CD8-positive, alpha-beta T cell (primary cell): ENCODE measurements at regions of chrX and their contacts with region 1.

Region 1: DNA sequence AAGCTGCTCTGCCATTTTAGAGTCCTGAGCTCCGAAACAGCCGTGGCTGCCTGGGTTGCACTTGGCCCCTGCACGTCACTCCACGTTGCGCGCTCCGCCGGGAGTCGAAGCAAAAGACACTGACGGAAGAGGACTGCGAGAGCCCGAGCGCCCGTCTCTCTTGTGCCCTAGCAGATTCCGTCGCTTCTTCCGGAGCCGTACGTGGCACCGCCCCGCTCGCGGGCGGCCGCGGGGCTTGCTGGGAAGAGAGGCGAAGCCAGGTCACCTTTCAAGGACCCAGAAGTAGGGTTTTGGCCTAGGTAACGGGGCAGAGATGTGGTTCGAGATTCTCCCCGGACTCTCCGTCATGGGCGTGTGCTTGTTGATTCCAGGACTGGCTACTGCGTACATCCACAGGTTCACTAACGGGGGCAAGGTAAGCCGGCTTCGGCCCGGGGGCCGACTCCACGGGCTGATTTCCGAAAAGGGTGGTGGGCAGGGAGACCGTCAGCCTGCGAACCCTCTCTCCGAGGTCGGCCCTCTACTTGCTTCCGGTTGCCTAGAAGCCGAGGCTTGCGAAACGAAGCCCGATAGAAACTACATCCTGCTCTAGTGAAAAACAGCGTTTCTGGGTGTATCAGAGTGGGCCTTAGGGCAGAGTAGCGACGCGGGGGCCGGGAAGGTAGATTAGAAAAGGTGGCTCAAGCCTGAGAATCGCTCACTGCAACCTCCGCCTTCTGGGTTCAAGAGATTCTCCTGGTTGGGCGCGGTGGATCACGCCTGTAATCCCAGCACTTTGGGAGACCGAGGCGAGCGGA is at the starts of genes NDUFA1 and RNF113A:
- DNase-seq: peak; percentile 69 to 94 (median 81)
- ATAC-seq: peak; percentile 87
- H3K4me3 ChIP-seq: peak within 1 kb of the TSS; percentile 77 to 80
- H3K4me3 Mint-ChIP-seq: peak within 1 kb of the TSS; percentile 97
- H3K27ac ChIP-seq: peak within 1 kb of the TSS; percentile 95 to 97
- H3K27ac Mint-ChIP-seq: peak within 1 kb of the TSS; percentile 99
- H3K4me1 ChIP-seq: peaks cover 7% of the 10 kb centered on the region
- H3K4me1 Mint-ChIP-seq: peaks cover 27% of the 10 kb centered on the region
- H3K27me3 ChIP-seq: no peaks in the 10 kb centered on the region
- H3K27me3 Mint-ChIP-seq: no peaks in the 10 kb centered on the region
- CTCF ChIP-seq: no peak
- total RNA-seq, gene NDUFA1: 48.3 to 51.0 TPM
- total RNA-seq, gene RNF113A: 27.8 to 29.4 TPM

Region 2: DNA sequence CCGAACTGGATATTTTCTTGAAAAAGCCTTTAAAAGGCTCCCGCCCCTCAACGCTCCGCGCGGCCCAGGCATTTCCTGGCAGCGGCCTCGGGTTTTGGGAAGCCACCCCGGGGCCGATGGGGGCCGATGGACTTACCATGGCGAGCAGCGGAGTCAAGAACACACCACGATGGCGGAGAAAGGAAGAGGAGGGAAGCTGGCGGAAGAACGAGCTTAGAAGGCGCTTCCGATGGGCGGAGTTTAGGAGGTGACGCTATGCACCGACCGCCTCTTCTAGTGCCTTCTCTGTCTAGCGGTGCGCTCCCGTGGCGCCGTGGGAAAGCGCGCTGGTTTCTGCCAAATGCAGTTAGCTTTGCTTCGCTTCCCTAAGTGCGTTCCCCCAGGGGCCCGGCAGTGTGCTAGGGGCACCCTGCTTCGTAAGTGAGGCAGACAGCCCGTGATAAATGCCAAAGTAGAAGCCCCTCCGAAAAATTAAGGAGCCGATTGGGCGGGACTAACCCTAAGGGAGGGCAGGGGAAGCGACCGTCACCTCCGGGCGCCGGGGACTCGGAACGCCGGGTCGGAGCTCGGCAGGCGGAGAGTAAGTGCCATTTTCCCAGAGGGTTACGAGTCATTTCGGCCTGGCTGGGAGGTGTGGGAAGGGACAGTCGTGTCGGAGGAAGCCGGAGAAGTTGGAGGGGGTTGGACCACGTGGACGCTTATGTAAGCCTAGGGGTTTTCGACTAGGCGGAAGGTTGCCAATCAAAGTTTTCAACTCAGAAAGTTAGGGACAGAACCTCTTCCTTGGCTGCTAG is 80.2 kb before region 1 on chrX and contains the start of gene RPL39:
- CTCF ChIA-PET with region 1: interaction called, 6 read pairs
- POLR2A ChIA-PET with region 1: interaction called, 33 read pairs
- intact Hi-C with region 1: loop called (anchors 1 to 2 kb)
- DNase-seq: peak; percentile 57 to 93 (median 78)
- ATAC-seq: peak; percentile 90
- H3K4me3 ChIP-seq: peak within 1 kb of the TSS; percentile 84 to 97
- H3K4me3 Mint-ChIP-seq: peak within 1 kb of the TSS; percentile 97
- H3K27ac ChIP-seq: peak within 1 kb of the TSS; percentile 88 to 98
- H3K27ac Mint-ChIP-seq: peak within 1 kb of the TSS; percentile 98
- H3K4me1 ChIP-seq: peaks cover 31% of the 10 kb centered on the region
- H3K4me1 Mint-ChIP-seq: peaks cover 44% of the 10 kb centered on the region
- H3K27me3 ChIP-seq: no peaks in the 10 kb centered on the region
- H3K27me3 Mint-ChIP-seq: no peaks in the 10 kb centered on the region
- CTCF ChIP-seq: no peak
- total RNA-seq, gene RPL39: 4,125 to 4,338 TPM

Region 3: DNA sequence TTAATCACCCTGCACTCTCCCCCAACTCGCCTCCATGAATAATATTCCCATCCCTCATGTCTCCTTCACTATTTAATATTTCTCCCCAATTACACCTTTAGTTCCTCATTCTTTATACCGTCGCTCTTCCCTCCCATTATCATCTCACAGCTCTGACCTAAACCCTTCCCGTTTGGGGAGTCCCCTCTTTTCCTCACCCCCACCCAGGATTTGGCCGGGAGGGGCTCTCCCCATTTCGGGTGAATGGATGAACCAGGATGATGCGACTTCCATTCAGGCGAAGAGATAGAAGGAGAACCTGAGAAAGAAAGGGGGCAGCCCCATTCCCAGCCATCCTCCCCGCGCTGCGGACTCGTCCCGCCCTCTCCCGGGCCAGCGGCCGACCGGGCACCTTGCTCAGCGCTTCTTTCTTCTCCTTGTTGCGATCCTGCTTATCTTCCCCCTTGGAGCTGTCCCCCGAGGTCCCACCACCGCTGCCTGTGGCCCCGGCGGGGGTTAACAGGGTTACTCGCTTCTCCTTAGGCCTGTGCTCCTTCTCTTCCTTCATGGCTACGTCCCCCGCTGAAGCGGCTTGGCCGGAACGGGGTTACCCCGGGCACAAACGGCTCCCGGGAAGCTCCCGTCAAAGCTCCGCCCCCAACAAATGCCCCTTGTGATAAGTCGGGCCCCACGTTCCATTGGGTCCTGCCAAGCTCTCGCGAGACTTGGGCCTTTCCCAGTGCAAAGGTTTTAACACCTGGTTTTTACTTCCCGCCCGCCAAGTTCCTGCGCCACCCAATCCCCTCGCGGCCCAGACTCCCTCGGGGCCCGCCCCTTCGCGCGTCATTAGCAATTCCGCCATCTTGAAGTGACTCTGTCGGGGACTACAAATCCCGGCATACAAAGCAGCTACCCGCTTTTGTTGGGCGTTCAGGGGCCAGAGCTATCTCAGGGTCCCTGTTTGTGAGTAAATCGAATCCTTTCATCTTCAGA is 19.1 kb before region 1 on chrX and contains the start of gene UPF3B:
- CTCF ChIA-PET with region 1: no interaction called
- POLR2A ChIA-PET with region 1: interaction called, 19 read pairs
- intact Hi-C with region 1: loop called (anchors 1 kb)
- DNase-seq: peak; percentile 82 to 98 (median 92)
- ATAC-seq: peak; percentile 97
- H3K4me3 ChIP-seq: peak within 1 kb of the TSS; percentile 95 to 96
- H3K4me3 Mint-ChIP-seq: peak within 1 kb of the TSS; percentile 99
- H3K27ac ChIP-seq: peak within 1 kb of the TSS; percentile 87 to 97
- H3K27ac Mint-ChIP-seq: peak within 1 kb of the TSS; percentile 98
- H3K4me1 ChIP-seq: peaks cover 7% of the 10 kb centered on the region
- H3K4me1 Mint-ChIP-seq: peaks cover 18% of the 10 kb centered on the region
- H3K27me3 ChIP-seq: no peaks in the 10 kb centered on the region
- H3K27me3 Mint-ChIP-seq: no peaks in the 10 kb centered on the region
- CTCF ChIP-seq: no peak
- total RNA-seq, gene UPF3B: 5.6 to 8.4 TPM

Region 4: DNA sequence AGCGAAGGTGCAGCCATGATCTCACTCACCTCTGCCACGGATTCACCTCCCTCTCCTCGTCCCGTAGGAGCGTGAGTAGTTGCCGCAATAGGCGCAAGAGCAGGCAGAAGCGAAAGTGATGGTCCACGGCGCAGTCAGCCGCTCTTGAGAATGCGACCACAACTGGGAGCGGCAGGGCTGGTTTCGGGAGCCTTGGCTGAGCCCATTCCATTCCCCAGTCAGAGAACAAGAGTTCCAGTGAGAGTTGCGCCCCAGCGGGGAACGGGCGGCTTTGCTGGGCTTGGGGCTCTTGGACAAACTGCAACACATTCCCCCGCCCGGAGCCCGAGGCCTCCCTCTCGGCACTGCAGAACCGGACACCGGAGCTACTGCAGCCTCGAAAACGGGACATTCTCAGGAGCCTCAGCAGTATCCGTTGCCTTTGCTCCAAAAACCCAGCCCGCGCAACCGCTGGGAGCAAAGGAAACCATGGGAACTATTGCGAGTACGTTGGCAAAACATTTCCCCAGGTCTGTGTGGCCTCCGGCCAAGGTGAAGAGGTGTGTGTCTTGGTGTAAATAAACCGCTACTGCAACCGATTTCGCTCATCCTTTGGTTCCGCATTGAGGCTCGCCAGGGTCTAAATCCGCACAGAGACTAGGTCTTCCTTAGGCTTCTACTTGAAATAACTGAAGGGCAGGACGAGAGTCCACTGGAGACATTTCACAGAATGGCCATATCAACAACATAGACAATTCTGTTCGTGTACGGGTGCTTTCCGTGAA is 373.1 kb after region 1 on chrX:
- CTCF ChIA-PET with region 1: no interaction called
- POLR2A ChIA-PET with region 1: no interaction called
- intact Hi-C with region 1: loop called (anchors 5 kb)
- DNase-seq: peak; percentile 28 to 77 (median 59)
- ATAC-seq: peak; percentile 88
- H3K4me3 ChIP-seq: peak overlapping the region; percentile 87 to 90
- H3K4me3 Mint-ChIP-seq: peak overlapping the region; percentile 98
- H3K27ac ChIP-seq: peak overlapping the region; percentile 73 to 90
- H3K27ac Mint-ChIP-seq: peak overlapping the region; percentile 93
- H3K4me1 ChIP-seq: peaks cover 15% of the 10 kb centered on the region
- H3K4me1 Mint-ChIP-seq: peaks cover 26% of the 10 kb centered on the region
- H3K27me3 ChIP-seq: no peaks in the 10 kb centered on the region
- H3K27me3 Mint-ChIP-seq: peaks cover 2% of the 10 kb centered on the region
- CTCF ChIP-seq: no peak

Region 5: DNA sequence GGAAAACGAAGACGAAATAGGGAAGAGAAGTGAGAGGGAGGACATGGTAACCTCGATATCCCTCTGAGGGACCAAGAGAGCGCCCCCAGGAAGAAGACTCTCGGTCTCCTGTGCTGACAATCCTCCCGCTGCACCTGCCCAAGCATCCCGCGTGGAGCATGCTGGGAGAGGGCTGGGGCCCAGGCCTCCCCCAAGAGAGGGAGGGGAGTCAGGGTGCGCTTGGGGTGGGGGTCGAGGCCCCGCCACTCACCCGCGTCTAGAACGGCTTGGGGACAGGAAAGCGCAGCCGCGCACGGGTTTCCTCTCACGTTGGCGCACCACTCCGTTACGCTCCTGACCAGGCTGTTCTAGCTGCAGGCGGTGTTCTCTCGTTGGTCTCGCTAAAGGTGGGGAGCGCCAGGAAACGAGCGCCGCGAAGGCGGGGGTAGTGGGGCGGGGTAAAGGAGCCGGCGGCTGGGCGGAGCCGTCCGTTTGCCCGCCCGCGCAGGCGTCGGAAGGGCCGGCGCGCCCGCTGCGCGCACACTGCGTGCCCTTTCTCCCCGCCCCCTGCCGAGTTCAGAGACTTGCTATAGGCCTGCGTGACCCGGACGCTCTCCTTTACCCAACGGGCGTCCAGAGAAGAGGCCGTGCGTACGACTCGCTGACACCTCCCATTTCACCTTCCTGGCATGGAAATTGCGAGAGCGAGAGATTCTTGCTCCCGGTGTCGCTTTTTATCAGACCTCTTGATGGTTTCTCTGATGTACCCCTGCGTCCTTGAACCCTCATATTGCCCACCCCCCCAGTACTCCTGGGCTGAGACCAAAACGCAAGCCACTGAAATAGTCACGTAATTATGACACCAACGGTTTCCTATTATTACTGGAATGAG is 758.1 kb after region 1 on chrX and contains the start of gene C1GALT1C1:
- CTCF ChIA-PET with region 1: no interaction called
- POLR2A ChIA-PET with region 1: no interaction called
- intact Hi-C with region 1: loop called in 1 of 2 experiments (anchors 5 kb)
- DNase-seq: peak; percentile 80 to 96 (median 89)
- ATAC-seq: peak; percentile 91
- H3K4me3 ChIP-seq: peak within 1 kb of the TSS; percentile 84 to 96
- H3K4me3 Mint-ChIP-seq: peak within 1 kb of the TSS; percentile 90
- H3K27ac ChIP-seq: peak within 1 kb of the TSS; percentile 95 to 96
- H3K27ac Mint-ChIP-seq: peak within 1 kb of the TSS; percentile 97
- H3K4me1 ChIP-seq: peaks cover 13% of the 10 kb centered on the region
- H3K4me1 Mint-ChIP-seq: peaks cover 23% of the 10 kb centered on the region
- H3K27me3 ChIP-seq: no peaks in the 10 kb centered on the region
- H3K27me3 Mint-ChIP-seq: no peaks in the 10 kb centered on the region
- CTCF ChIP-seq: no peak
- total RNA-seq, gene C1GALT1C1: 1.1 to 1.9 TPM